ENCODE measurements at regions of chr6 and their contacts with region 1.

Region 1: DNA sequence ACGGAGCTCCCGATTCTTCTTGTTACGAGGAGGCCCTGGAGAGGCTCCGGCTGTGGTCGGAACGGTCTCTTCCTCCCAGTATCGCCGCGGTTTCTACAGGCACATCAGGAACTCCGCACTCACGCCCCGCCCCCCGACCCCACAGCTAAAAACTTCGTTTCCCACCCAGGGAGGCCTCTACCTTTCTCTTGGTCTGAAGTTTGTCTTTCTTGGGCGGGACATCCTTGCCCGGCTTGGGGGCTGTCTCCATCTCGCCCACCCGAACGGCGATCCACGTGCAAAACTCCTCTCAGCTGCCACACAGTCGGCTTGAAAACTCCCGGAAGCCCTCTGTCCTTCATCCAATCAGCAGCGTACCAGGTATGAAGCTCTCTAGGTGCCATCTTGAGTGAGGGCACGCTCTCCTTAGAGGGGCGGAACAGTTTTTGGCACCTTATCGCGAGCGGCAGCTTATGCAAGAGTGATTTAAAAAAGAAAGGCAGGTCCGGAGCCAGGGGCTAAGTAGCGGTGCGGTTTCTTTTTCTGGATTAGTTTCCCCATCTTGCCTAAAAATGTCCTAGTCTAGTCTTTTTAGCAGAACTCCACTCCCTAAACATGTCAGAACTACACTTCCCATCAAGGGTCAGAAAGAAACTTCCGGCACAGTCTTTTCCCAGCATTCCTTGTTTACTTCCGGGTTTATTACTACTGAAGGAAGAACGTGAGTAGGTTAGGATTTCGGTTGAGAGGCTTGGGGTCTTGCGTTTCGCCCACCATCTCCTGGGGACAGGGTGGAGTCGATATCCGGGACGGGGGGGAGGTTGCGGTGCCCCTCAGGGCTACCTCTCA is at the starts of genes PFDN6 and WDR46:
- DNase-seq: peak; percentile 75 to 84 (median 79)
- H3K4me3 ChIP-seq: peak within 1 kb of the TSS; percentile 88
- H3K27ac ChIP-seq: peak within 1 kb of the TSS in 1 of 2 donors; percentile 69
- H3K4me1 ChIP-seq: peaks cover 6% of the 10 kb centered on the region
- H3K27me3 ChIP-seq: no peaks in the 10 kb centered on the region
- CTCF ChIP-seq: no peak
- EP300 ChIP-seq: peak; percentile 46
- POLR2A ChIP-seq: peak; percentile 33
- total RNA-seq, gene PFDN6: 9.8 to 46.8 (median 42.0) TPM
- total RNA-seq, gene WDR46: 29.1 to 58.5 (median 35.0) TPM

Region 2: DNA sequence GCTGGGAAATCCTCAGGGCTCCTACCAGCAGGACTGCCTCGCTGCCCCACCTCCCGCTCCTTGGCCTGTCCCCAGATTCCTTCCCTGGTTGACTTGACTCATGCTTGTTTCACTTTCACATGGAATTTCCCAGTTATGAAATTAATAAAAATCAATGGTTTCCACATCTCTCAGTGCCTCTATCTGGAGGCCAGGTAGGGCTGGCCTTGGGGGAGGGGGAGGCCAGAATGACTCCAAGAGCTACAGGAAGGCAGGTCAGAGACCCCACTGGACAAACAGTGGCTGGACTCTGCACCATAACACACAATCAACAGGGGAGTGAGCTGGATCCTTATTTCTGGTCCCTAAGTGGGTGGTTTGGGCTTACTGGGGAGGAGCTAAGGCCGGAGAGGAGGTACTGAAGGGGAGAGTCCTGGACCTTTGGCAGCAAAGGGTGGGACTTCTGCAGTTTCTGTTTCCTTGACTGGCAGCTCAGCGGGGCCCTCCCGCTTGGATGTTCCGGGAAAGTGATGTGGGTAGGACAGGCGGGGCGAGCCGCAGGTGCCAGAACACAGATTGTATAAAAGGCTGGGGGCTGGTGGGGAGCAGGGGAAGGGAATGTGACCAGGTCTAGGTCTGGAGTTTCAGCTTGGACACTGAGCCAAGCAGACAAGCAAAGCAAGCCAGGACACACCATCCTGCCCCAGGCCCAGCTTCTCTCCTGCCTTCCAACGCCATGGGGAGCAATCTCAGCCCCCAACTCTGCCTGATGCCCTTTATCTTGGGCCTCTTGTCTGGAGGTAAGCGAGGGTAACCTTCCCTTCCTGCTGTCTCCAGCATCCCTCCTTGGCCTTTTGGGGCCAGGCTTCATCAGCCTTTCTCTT is 1343.4 kb before region 1 on chr6 and contains the start of gene CFB:
- intact Hi-C with region 1: loop called in 1 of 4 experiments (anchors 10 kb)
- DNase-seq: peak; percentile 77 to 90 (median 82)
- H3K4me3 ChIP-seq: peak within 1 kb of the TSS; percentile 23
- H3K27ac ChIP-seq: peak within 1 kb of the TSS; percentile 9 to 75
- H3K4me1 ChIP-seq: peaks cover 6% of the 10 kb centered on the region
- H3K27me3 ChIP-seq: no peaks in the 10 kb centered on the region
- CTCF ChIP-seq: no peak
- EP300 ChIP-seq: peak; percentile 37
- POLR2A ChIP-seq: no peak
- total RNA-seq, gene CFB: 11.3 to 231 (median 23.8) TPM